ENCODE measurements at regions of chr7 and their contacts with region 1.

Region 1: DNA sequence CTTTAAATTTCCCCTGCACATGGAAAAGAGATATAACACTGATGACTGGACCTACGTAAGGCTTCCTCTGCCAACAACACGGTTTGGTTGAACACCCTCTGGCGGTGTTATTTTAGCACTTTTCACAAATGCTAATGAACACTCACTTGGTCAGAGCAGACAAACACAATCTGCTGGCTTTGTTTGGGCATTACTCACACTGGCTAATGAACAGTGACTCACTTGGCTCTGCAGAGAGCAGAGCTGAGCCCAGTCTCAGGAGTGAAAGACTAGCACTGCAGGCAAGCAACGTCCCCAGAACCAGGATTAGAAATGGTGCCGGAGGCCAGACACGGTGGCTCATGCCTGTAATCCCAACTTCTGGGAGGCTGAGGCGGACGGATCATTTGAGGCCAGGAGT is 430.8 kb downstream of the PLXNA4 start:
- DNase-seq: no peak

Region 2: GRCh38 chr7:131959106-131959812 is 186.2 kb before region 1 on chr7:
- intact Hi-C with region 1: loop called in 1 of 2 experiments (anchors 10 kb)
- DNase-seq: no peak

Region 3: DNA sequence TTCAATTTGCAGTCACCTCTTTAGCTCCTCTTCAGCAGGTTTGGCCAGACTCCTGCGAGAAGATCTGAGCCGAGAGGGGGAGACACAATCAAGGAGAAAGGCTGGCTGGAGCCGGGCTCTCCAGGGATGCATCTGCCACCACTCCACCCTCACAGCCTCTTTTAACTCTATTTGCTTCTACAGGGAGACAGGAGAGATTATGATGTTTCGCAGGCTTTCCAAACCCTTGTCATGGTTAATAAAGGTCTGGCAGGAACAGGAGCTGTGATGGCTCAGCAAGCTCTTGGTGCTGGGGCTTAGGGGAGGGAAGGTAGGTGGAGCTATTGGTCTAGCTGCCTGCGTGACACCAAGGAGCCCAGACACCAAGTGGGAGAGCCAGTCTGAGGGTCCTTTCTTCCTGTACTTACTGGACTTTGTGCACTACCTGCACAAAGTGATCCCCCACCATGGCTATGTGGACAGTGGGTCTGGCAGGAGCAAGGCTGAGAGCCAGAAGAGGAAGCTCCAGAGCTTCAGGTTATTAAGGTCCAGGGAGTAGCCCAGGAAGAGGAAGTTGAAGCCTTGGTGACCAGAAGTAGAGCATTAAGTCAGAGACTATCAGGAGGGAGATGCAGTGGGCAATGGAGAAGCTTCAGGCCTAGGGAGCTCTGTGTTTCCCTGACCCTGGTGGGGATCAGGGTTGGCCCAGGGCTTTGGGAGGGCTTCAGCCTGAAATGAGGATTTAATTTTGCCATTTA is 140.8 kb before region 1 on chr7:
- intact Hi-C with region 1: no loop called
- DNase-seq: no peak

Region 4: GRCh38 chr7:132130497-132130896 is 15.0 kb before region 1 on chr7:
- intact Hi-C with region 1: no loop called
- DNase-seq: no peak